ENCODE measurements at regions of chr13 and their contacts with region 1.

Region 1: DNA sequence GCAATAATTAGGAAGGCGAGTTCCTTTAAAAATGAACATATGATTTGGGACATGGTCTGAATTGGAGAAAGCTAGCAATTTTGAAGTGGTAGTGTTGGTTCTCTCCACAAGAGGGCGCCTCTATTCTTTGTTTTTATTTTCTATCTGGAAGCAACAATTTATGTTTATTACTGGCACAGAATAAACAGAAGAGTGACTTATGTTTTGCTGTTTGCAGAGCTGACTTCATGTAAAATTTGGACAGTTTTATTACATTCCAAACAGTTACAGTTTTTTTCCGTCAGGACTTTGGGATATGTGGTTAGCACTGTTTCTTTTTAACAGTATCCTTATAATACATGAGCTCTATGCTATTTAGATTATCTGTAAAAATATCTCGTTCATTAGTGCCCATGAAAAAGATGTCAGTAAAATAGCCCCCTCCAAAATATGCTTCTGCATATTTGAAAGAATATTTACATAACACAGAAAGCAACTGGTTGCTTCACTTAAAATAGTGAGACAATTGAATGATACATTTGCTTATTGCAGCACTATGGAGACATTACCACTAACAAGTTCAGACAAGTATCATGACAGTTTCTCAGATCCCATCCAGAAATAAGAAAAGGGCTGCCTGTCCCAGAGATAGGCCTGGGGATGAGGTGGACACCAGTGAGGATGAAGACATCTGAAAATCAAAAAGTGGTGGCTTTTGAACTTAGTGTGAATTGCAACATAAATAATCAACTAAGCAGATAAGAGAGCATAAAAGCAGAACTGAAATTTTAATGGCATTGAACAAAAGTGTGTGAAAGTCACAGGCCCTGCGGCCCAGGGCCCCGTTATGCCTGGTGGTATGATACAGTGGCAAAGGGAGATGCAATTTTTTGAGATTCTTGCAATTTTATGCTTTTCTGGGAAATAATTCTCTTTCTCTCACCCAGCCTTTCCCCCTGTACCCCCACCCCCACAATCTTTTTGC is 32.3 kb upstream of the FGF9 start:
- DNase-seq: no peak
- H3K4me3 ChIP-seq: no peak overlapping the region
- H3K27ac ChIP-seq: no peak overlapping the region
- H3K4me1 ChIP-seq: no peaks in the 10 kb centered on the region
- H3K27me3 ChIP-seq: peaks cover 0 to 12% of the 10 kb centered on the region in 2 donors
- CTCF ChIP-seq: peak; percentile 71 to 76

Region 2: GRCh38 chr13:22040810-22041371 is 402.3 kb after region 1 on chr13:
- intact Hi-C with region 1: loop called (anchors 10 kb)
- DNase-seq: no peak
- H3K4me3 ChIP-seq: no peak overlapping the region
- H3K27ac ChIP-seq: no peak overlapping the region
- H3K4me1 ChIP-seq: no peaks in the 10 kb centered on the region
- H3K27me3 ChIP-seq: no peaks in the 10 kb centered on the region
- CTCF ChIP-seq: no peak

Region 3: GRCh38 chr13:22076658-22077057 is 438.1 kb after region 1 on chr13:
- intact Hi-C with region 1: no loop called
- DNase-seq: no peak
- H3K4me3 ChIP-seq: no peak overlapping the region
- H3K27ac ChIP-seq: no peak overlapping the region
- H3K4me1 ChIP-seq: no peaks in the 10 kb centered on the region
- H3K27me3 ChIP-seq: no peaks in the 10 kb centered on the region
- CTCF ChIP-seq: no peak

Region 4: GRCh38 chr13:22761709-22762108 is 1123.1 kb after region 1 on chr13:
- intact Hi-C with region 1: loop called (anchors 5 kb)
- DNase-seq: no peak
- H3K4me3 ChIP-seq: no peak overlapping the region
- H3K27ac ChIP-seq: no peak overlapping the region
- H3K4me1 ChIP-seq: no peaks in the 10 kb centered on the region
- H3K27me3 ChIP-seq: no peaks in the 10 kb centered on the region
- CTCF ChIP-seq: no peak